H1 (cell line): ENCODE measurements at regions of chr7 and their contacts with region 1.

Region 1: GRCh38 chr7:150903606-150904005 is 51.3 kb downstream of the AOC1 start:
- DNase-seq: no peak
- H3K4me3 ChIP-seq: no peak overlapping the region
- H3K27ac ChIP-seq: no peak overlapping the region
- H3K4me1 ChIP-seq: peaks cover 0 to 15% (median 4%) of the 10 kb centered on the region in 4 experiments; a peak in 4 of 7 replicates
- H3K27me3 ChIP-seq: peaks cover 0 to 11% (median 6%) of the 10 kb centered on the region in 4 experiments; a peak in 4 of 7 replicates
- CTCF ChIP-seq: no peak
- EP300 ChIP-seq: no peak
- POLR2A ChIP-seq: no peak
- RAD21 ChIP-seq: no peak

Region 2: GRCh38 chr7:150941981-150942590 is 38.5 kb after region 1 on chr7:
- CTCF ChIA-PET with region 1: interaction called, 14 read pairs
- POLR2A ChIA-PET with region 1: interaction called, 3 read pairs
- DNase-seq: no peak
- H3K4me3 ChIP-seq: no peak overlapping the region
- H3K27ac ChIP-seq: no peak overlapping the region
- H3K4me1 ChIP-seq: peaks cover 0 to 24% (median 12%) of the 10 kb centered on the region in 4 experiments; a peak in 6 of 7 replicates
- H3K27me3 ChIP-seq: peaks cover 0 to 9% (median 4%) of the 10 kb centered on the region in 4 experiments; a peak in 2 of 7 replicates
- CTCF ChIP-seq: no peak
- EP300 ChIP-seq: no peak
- POLR2A ChIP-seq: no peak
- RAD21 ChIP-seq: no peak

Region 3: DNA sequence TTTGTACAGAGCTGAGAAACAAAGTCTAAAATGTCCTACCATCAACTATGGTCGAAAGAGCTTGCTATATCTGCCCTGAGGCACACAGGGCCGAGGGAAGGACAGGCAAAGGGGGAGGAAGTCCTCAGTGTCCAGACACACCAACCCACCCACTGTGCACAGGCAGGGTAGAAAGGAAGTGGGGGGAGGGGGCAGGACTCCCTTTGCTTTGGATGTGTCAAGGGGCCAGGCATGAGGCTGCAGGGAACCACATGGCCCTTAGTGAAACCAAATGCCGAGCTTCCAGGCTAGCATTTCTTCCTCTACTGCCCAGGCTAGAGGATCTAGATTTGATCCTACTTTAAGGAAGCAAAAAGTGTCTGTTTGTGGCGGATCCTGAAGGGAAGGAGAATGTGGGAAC is 46.0 kb after region 1 on chr7:
- CTCF ChIA-PET with region 1: interaction called, 14 read pairs
- POLR2A ChIA-PET with region 1: interaction called, 3 read pairs
- DNase-seq: no peak
- H3K4me3 ChIP-seq: no peak overlapping the region
- H3K27ac ChIP-seq: no peak overlapping the region
- H3K4me1 ChIP-seq: peaks cover 0 to 40% (median 26%) of the 10 kb centered on the region in 4 experiments; a peak in 6 of 7 replicates
- H3K27me3 ChIP-seq: peaks cover 0 to 18% (median 13%) of the 10 kb centered on the region in 4 experiments; a peak in 5 of 7 replicates
- CTCF ChIP-seq: no peak
- EP300 ChIP-seq: no peak
- POLR2A ChIP-seq: no peak
- RAD21 ChIP-seq: no peak

Region 4: DNA sequence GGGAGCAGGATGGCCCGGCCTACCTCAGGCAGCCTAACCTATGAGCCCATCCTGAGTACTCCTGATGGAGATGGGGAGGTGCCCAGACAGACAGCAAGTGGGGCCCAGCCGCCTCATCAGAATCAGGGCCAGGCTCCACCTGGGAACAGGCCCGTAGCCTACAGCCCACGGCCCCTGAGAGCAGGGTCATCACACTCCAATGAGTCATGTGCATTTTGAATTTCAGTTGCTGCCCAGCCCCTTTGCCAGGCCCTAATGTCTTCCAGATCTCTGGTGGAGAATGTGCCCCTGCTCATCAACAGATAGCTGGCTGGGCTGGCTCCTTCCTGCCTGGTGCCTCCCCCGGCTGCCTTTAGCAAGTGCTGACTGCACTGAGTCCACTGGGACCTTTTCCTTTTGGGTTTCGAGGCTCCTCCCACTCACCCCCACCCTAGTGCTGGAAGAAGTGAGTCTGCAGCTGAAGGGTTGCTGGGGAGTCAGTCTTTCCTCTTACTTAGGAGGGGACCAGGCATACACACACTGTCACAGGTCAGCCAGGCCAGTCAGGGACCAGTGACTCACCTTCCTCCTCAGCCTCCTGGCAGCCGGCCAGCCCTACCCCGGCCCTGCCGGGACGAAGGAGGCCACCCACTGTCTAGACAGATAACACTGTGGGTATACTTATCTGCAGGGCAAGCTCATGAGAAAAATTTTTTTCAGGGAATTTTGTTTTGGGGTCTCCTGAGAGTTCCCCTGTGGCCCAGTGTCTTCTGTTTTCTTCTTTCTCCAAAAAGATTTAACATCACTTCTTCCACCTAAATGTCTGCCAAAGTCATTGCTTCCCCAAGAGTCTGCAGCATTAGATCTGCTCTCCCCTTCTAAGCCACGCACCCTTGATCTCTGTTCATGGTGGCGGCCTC is 135.6 kb after region 1 on chr7:
- CTCF ChIA-PET with region 1: no interaction called
- POLR2A ChIA-PET with region 1: no interaction called
- DNase-seq: no peak
- H3K4me3 ChIP-seq: no peak overlapping the region
- H3K27ac ChIP-seq: no peak overlapping the region
- H3K4me1 ChIP-seq: no peaks in the 10 kb centered on the region
- H3K27me3 ChIP-seq: no peaks in the 10 kb centered on the region; a peak in 1 of 7 replicates
- CTCF ChIP-seq: no peak
- EP300 ChIP-seq: no peak
- POLR2A ChIP-seq: no peak
- RAD21 ChIP-seq: no peak